CD8-positive, alpha-beta T cell (primary cell): ENCODE measurements at regions of chr6 and their contacts with region 1.

Region 1: DNA sequence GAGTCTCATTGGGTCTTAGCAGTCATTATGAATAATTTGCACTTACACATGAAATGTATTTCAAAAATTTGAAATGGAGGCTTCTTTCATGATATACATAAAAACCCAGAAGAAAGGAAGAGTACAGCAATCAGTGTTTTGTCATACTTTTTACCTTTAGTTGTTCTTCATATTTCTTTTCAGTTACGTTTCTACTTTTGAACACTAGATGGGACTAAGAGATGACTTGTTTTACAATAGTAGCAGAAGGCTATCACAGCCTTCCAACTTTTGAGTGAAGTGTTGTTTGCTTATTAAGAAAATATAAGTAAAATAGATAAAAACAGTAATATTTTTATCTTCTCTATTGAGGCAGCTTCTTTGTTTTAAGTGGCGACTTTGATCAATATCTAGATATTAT is 58.1 kb downstream of the L3MBTL3 start:
- DNase-seq: peak in 2 of 9 experiments; percentile 25 to 39
- ATAC-seq: no peak
- H3K4me3 ChIP-seq: no peak overlapping the region
- H3K4me3 Mint-ChIP-seq: no peak overlapping the region
- H3K27ac ChIP-seq: no peak overlapping the region
- H3K27ac Mint-ChIP-seq: no peak overlapping the region
- H3K4me1 ChIP-seq: no peaks in the 10 kb centered on the region
- H3K4me1 Mint-ChIP-seq: peaks cover 18% of the 10 kb centered on the region
- H3K27me3 ChIP-seq: no peaks in the 10 kb centered on the region
- H3K27me3 Mint-ChIP-seq: no peaks in the 10 kb centered on the region
- CTCF ChIP-seq: no peak

Region 2: GRCh38 chr6:130120731-130121130 is 44.2 kb after region 1 on chr6:
- CTCF ChIA-PET with region 1: interaction called, 3 read pairs
- POLR2A ChIA-PET with region 1: no interaction called
- intact Hi-C with region 1: loop called in 1 of 2 experiments (anchors 5 kb)
- DNase-seq: peak in 1 of 9 experiments; percentile 18
- ATAC-seq: peak; percentile 49
- H3K4me3 ChIP-seq: no peak overlapping the region
- H3K4me3 Mint-ChIP-seq: no peak overlapping the region
- H3K27ac ChIP-seq: no peak overlapping the region
- H3K27ac Mint-ChIP-seq: peak overlapping the region; percentile 27
- H3K4me1 ChIP-seq: no peaks in the 10 kb centered on the region
- H3K4me1 Mint-ChIP-seq: peaks cover 22% of the 10 kb centered on the region
- H3K27me3 ChIP-seq: no peaks in the 10 kb centered on the region
- H3K27me3 Mint-ChIP-seq: no peaks in the 10 kb centered on the region
- CTCF ChIP-seq: no peak

Region 3: DNA sequence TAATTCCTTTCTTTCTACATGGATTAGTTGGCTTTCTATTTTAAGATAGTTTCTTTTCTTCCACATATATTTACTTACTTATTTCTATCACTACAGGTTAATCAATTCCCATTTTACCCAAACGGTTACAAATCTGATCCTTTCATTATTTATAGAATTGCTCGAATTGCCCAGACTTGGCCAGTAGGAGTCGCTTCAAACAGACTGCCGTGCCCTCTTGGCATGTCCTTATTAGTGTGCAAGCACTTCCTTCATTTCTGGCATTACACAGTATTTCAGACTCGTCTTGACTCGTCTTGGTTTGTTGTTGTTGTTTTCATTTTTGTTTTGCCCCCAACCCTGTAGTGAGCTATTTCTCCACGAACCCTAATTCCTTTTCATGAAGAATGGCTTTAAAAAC is 71.7 kb after region 1 on chr6:
- CTCF ChIA-PET with region 1: no interaction called
- POLR2A ChIA-PET with region 1: interaction called, 3 read pairs
- intact Hi-C with region 1: loop called in 1 of 2 experiments (anchors 5 kb)
- DNase-seq: peak in 3 of 9 experiments; percentile 21 to 48 (median 33)
- ATAC-seq: peak; percentile 55
- H3K4me3 ChIP-seq: no peak overlapping the region
- H3K4me3 Mint-ChIP-seq: no peak overlapping the region
- H3K27ac ChIP-seq: peak overlapping the region in 1 of 2 experiments; percentile 22
- H3K27ac Mint-ChIP-seq: peak overlapping the region; percentile 25
- H3K4me1 ChIP-seq: no peaks in the 10 kb centered on the region
- H3K4me1 Mint-ChIP-seq: peaks cover 11% of the 10 kb centered on the region
- H3K27me3 ChIP-seq: no peaks in the 10 kb centered on the region
- H3K27me3 Mint-ChIP-seq: no peaks in the 10 kb centered on the region
- CTCF ChIP-seq: no peak

Region 4: DNA sequence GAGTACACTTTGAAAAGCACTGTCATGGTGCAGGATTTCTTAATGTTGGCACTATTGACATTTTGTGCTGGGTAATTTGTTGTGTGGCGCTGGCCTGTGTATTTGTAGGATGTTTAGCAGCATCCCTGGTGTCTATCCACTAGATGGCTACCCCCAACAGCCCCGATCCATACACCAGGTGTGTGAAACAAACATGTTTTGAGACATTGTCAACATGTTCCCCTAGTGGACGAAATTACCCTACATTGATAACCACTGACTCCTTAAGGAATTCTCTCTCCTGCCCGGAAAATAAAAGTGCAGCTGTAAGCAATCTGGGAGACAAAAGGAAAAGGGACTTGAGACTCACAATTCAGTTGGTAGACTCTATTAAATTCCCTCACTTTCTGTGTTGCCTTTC is 236.7 kb after region 1 on chr6:
- CTCF ChIA-PET with region 1: no interaction called
- POLR2A ChIA-PET with region 1: no interaction called
- intact Hi-C with region 1: no loop called
- DNase-seq: no peak
- ATAC-seq: no peak
- H3K4me3 ChIP-seq: no peak overlapping the region
- H3K4me3 Mint-ChIP-seq: no peak overlapping the region
- H3K27ac ChIP-seq: no peak overlapping the region
- H3K27ac Mint-ChIP-seq: no peak overlapping the region
- H3K4me1 ChIP-seq: no peaks in the 10 kb centered on the region
- H3K4me1 Mint-ChIP-seq: no peaks in the 10 kb centered on the region
- H3K27me3 ChIP-seq: no peaks in the 10 kb centered on the region
- H3K27me3 Mint-ChIP-seq: no peaks in the 10 kb centered on the region
- CTCF ChIP-seq: no peak